ENCODE measurements at regions of chr1 and their contacts with region 1.

Region 1: DNA sequence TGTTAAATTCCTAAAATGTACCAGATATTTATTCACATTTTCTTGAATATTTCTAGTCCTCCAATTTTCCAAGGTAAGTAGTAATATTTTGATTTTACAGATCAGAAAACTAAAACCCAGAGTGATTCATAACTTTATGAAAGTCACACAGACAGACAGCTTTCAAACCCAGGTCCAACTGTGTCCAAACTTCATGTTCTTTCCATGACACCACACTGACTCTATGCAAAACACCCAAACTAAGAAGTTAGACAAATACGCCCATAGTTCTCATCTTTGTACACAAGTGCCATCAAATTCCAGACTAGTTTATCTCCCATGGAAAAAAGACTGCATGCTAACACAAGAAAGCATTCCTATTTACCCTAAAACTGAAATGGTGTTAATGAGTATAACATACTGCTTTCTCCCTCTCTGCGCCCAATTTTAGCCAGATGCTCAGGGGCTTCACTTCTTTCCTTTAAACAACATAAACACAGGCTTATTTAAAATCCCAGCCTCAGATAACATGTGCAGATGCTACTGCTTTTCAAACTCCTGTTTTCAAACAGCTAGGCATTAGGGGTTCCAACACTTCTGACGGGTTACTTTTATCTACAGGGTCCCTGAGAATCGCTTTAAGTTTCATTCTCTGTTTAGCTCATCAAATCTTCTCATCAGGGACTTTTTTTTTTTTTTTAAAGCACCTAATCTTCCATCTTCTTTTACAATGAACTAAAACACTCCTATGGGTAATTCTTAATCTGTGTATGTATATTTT is 44.6 kb downstream of the WASF2 start:
- DNase-seq: peak; percentile 21
- H3K4me3 Mint-ChIP-seq: peak overlapping the region; percentile 32
- H3K27ac Mint-ChIP-seq: peak overlapping the region; percentile 81
- H3K4me1 Mint-ChIP-seq: peaks cover 60% of the 10 kb centered on the region
- H3K27me3 Mint-ChIP-seq: no peaks in the 10 kb centered on the region

Region 2: DNA sequence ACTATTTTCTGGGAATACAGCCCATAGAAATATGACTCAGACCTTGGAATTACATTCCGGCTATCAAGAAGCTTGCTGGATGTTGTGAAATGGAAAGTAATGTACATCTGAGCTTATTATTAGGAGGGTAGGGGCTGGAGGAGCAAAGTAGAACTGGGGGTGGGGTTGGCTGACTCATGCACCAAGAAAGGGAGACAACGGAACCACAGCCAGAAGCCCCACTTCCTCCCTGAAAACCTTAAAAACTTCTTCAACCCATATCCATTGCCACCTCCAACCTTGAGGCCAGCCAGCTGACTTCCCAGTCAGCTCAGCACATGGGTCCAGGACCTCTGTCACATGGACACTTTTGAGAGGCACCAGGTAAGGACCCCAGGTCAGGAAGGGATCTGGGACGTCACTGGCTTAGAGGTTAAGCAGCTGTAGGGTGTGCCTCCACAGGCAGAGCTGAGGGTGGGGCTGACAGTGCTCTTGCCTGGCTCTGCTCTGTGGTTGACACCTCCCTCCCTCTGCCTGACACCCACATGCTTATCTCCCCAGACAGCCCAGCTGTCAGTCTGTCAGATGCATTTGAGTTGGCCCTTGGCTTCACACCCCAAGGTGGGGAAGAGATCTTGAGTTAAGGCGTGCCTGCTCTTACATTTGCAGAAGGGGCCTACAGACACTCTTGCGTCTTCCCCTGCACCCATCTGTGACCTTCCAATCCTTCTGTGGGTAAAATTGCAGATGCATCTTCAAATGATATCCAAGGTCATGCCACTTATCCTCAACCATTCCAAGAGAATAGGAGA is 1067.1 kb before region 1 on chr1:
- CTCF ChIA-PET with region 1: no interaction called
- intact Hi-C with region 1: no loop called
- DNase-seq: peak; percentile 66
- H3K4me3 Mint-ChIP-seq: no peak overlapping the region
- H3K27ac Mint-ChIP-seq: peak overlapping the region; percentile 53
- H3K4me1 Mint-ChIP-seq: peaks cover 54% of the 10 kb centered on the region
- H3K27me3 Mint-ChIP-seq: no peaks in the 10 kb centered on the region

Region 3: GRCh38 chr1:27257155-27257554 is 188.2 kb before region 1 on chr1:
- CTCF ChIA-PET with region 1: no interaction called
- intact Hi-C with region 1: loop called (anchors 2 kb)
- DNase-seq: no peak
- H3K4me3 Mint-ChIP-seq: no peak overlapping the region
- H3K27ac Mint-ChIP-seq: no peak overlapping the region
- H3K4me1 Mint-ChIP-seq: peaks cover 56% of the 10 kb centered on the region
- H3K27me3 Mint-ChIP-seq: no peaks in the 10 kb centered on the region

Region 4: GRCh38 chr1:27416387-27417111 is 28.8 kb before region 1 on chr1:
- CTCF ChIA-PET with region 1: interaction called, 4 read pairs
- intact Hi-C with region 1: loop called (anchors 1 kb)
- DNase-seq: peak; percentile 72
- H3K4me3 Mint-ChIP-seq: no peak overlapping the region
- H3K27ac Mint-ChIP-seq: no peak overlapping the region
- H3K4me1 Mint-ChIP-seq: peaks cover 38% of the 10 kb centered on the region
- H3K27me3 Mint-ChIP-seq: no peaks in the 10 kb centered on the region

Region 5: GRCh38 chr1:27430903-27431600 is 14.3 kb before region 1 on chr1:
- CTCF ChIA-PET with region 1: interaction called, 5 read pairs
- intact Hi-C with region 1: loop called (anchors 1 kb)
- DNase-seq: peak; percentile 41
- H3K4me3 Mint-ChIP-seq: peak overlapping the region; percentile 12
- H3K27ac Mint-ChIP-seq: peak overlapping the region; percentile 76
- H3K4me1 Mint-ChIP-seq: peaks cover 84% of the 10 kb centered on the region
- H3K27me3 Mint-ChIP-seq: no peaks in the 10 kb centered on the region

Region 6: GRCh38 chr1:27481994-27482620 is 36.8 kb after region 1 on chr1:
- CTCF ChIA-PET with region 1: no interaction called
- intact Hi-C with region 1: loop called (anchors 1 kb)
- DNase-seq: no peak
- H3K4me3 Mint-ChIP-seq: no peak overlapping the region
- H3K27ac Mint-ChIP-seq: peak overlapping the region; percentile 81
- H3K4me1 Mint-ChIP-seq: peaks cover 64% of the 10 kb centered on the region
- H3K27me3 Mint-ChIP-seq: no peaks in the 10 kb centered on the region

Region 7: DNA sequence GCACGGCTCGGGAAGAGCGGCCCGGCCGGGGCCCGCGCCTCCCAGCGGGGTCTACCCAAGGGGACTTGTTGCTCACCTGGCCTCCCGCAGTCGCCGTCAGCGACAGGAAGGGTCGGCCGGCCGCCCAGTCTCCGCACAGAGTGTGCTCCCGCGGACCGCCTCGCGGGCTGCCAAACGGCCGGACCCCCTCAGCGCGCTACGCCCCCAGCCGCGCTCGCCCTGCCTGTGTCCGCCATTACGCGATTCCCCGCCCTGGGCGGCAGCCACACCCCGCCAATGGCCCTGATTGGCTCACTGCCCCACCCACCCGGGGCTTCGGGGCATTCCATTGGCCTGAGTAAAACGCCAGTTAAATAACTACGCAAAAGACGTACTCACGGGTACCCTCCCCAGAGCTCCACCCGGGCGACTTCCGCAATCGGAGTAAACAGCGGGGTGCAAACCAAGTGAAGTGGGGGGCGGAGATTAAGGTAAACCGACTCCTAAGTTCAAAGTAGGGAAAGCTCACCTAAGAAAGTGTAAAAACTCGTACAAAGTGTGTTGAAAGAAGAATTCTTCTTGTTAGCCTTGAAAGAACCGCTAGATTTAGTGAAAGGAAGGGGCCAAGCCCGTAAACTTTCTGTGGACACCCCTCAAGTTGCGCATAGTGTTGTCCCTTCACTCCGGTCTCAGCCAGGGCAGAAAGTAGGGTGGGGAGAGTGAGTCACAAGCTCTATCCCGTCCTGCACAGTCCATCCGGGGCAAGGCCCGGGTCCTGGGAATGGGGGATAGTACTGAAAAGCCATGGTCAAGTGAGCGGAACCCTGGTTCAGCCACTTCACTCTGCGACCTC is 44.8 kb after region 1 on chr1 and contains the start of gene WASF2:
- CTCF ChIA-PET with region 1: no interaction called
- intact Hi-C with region 1: loop called (anchors 1 kb)
- DNase-seq: peak; percentile 98
- H3K4me3 Mint-ChIP-seq: peak within 1 kb of the TSS; percentile 89
- H3K27ac Mint-ChIP-seq: peak within 1 kb of the TSS; percentile 99
- H3K4me1 Mint-ChIP-seq: peaks cover 30% of the 10 kb centered on the region
- H3K27me3 Mint-ChIP-seq: no peaks in the 10 kb centered on the region
- total RNA-seq, gene WASF2: 105 to 106 TPM